Activated T-helper 2 cell treated with anti-CD3 and anti-CD28 coated beads, Interferon-gamma antibody, Interleukin-2, Interleukin-4, amounts not matched to agents 10 μg/mL and 5 μg/mL and 100 μg/mL, durations not matched to agents 14 hours and 24 hours and 36 hours (primary cell): ENCODE measurements at regions of chr6 and their contacts with region 1.

Region 1: DNA sequence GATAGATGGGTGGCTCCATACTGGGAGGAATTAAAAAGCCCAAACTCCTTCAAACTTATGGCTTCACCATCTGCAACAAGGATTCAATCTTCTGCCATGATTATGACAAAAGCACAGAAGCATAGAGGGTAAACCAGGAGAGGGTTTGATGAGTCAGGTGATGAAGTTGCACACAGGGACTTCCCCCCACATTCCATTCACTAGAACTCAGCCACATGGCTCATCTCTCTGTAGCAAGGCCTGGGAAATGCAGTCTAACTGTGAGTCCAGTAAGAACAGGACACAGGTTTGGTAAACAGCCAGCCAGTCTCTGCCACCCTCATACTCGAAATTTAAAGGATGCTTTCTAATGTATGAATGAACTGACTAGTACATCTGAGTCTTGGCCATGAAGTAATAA is 142.9 kb downstream of the HIVEP2 start:
- DNase-seq: no peak
- H3K4me3 Mint-ChIP-seq: no peak overlapping the region
- H3K27ac Mint-ChIP-seq: peak overlapping the region; percentile 56
- H3K4me1 Mint-ChIP-seq: peaks cover 41% of the 10 kb centered on the region
- H3K27me3 Mint-ChIP-seq: no peaks in the 10 kb centered on the region

Region 2: GRCh38 chr6:142756215-142756634 is 45.9 kb before region 1 on chr6:
- intact Hi-C with region 1: no loop called
- DNase-seq: no peak
- H3K4me3 Mint-ChIP-seq: no peak overlapping the region
- H3K27ac Mint-ChIP-seq: no peak overlapping the region
- H3K4me1 Mint-ChIP-seq: peaks cover 18% of the 10 kb centered on the region
- H3K27me3 Mint-ChIP-seq: no peaks in the 10 kb centered on the region

Region 3: DNA sequence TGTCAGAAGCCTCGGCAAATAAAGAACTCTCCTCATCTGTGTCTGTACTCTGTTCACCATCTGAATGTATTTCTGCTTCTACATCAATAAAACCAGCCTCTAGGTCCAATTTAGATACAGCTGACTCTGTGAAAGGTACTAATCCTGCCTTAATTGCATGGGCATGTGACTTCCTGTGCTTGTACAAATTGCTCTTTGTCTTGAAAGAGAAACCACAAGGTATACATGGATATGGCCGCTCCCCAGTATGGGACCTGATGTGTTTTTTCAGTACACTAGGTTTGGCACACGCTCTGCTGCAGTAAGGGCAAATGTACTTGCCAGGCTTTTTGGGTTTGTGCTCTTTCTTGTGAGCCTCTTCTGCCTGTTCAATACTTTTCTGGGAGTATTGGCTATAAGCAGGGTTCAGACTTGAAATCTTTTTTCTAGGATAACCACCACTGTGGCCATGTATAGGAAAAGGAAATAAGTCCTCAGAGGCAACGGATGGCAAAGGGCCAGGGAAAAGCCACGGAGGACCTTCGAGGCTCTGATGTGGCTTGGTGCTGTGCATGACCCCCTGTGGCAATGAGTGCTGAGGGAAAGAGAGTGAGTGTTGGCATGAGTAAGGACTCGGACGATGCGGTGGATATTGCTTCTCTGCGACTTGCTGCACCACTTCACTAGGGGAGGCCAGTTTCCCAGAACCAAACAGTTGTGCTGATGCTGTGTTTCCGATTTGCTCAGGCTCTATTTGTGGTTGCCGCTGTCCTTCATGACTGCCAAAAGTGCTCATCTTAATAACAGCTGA is 28.1 kb before region 1 on chr6:
- intact Hi-C with region 1: loop called (anchors 2 kb)
- DNase-seq: no peak
- H3K4me3 Mint-ChIP-seq: no peak overlapping the region
- H3K27ac Mint-ChIP-seq: no peak overlapping the region
- H3K4me1 Mint-ChIP-seq: peaks cover 23% of the 10 kb centered on the region
- H3K27me3 Mint-ChIP-seq: no peaks in the 10 kb centered on the region

Region 4: GRCh38 chr6:142885182-142885867 is 83.2 kb after region 1 on chr6:
- intact Hi-C with region 1: loop called (anchors 1 kb)
- DNase-seq: peak; percentile 26
- H3K4me3 Mint-ChIP-seq: peak overlapping the region; percentile 92
- H3K27ac Mint-ChIP-seq: peak overlapping the region; percentile 99
- H3K4me1 Mint-ChIP-seq: peaks cover 65% of the 10 kb centered on the region
- H3K27me3 Mint-ChIP-seq: no peaks in the 10 kb centered on the region